ENCODE measurements at regions of chr11 and their contacts with region 1.

Region 1: GRCh38 chr11:11787305-11788062 is 54.3 kb upstream of the USP47 start:
- DNase-seq: peak; percentile 64 to 70
- ATAC-seq: peak; percentile 91 to 98
- H3K4me3 ChIP-seq: no peak overlapping the region
- H3K27ac ChIP-seq: no peak overlapping the region
- H3K4me1 ChIP-seq: no peaks in the 10 kb centered on the region
- CTCF ChIP-seq: peak; percentile 96
- EP300 ChIP-seq: no peak
- POLR2A ChIP-seq: no peak
- RAD21 ChIP-seq: peak; percentile 98

Region 2: GRCh38 chr11:10770626-10771254 is 1016.7 kb before region 1 on chr11:
- CTCF ChIA-PET with region 1: interaction called, 16 read pairs
- POLR2A ChIA-PET with region 1: no interaction called
- DNase-seq: peak; percentile 60 to 72
- ATAC-seq: peak; percentile 73 to 85; a peak in 4 of 6 replicates
- H3K4me3 ChIP-seq: no peak overlapping the region
- H3K27ac ChIP-seq: no peak overlapping the region
- H3K4me1 ChIP-seq: no peaks in the 10 kb centered on the region
- CTCF ChIP-seq: peak; percentile 87
- EP300 ChIP-seq: no peak
- POLR2A ChIP-seq: no peak
- RAD21 ChIP-seq: peak; percentile 63 to 68

Region 3: GRCh38 chr11:10943968-10944367 is 843.5 kb before region 1 on chr11:
- CTCF ChIA-PET with region 1: interaction called, 29 read pairs
- POLR2A ChIA-PET with region 1: no interaction called
- DNase-seq: no peak
- ATAC-seq: peak; percentile 39 to 49; a peak in 2 of 6 replicates
- H3K4me3 ChIP-seq: no peak overlapping the region
- H3K27ac ChIP-seq: peak overlapping the region in 1 of 2 experiments; percentile 13; a peak in 1 of 6 replicates
- H3K4me1 ChIP-seq: peaks cover 9% of the 10 kb centered on the region; the same call in 2 of the 3 replicates
- CTCF ChIP-seq: no peak
- EP300 ChIP-seq: no peak
- POLR2A ChIP-seq: no peak
- RAD21 ChIP-seq: no peak

Region 4: DNA sequence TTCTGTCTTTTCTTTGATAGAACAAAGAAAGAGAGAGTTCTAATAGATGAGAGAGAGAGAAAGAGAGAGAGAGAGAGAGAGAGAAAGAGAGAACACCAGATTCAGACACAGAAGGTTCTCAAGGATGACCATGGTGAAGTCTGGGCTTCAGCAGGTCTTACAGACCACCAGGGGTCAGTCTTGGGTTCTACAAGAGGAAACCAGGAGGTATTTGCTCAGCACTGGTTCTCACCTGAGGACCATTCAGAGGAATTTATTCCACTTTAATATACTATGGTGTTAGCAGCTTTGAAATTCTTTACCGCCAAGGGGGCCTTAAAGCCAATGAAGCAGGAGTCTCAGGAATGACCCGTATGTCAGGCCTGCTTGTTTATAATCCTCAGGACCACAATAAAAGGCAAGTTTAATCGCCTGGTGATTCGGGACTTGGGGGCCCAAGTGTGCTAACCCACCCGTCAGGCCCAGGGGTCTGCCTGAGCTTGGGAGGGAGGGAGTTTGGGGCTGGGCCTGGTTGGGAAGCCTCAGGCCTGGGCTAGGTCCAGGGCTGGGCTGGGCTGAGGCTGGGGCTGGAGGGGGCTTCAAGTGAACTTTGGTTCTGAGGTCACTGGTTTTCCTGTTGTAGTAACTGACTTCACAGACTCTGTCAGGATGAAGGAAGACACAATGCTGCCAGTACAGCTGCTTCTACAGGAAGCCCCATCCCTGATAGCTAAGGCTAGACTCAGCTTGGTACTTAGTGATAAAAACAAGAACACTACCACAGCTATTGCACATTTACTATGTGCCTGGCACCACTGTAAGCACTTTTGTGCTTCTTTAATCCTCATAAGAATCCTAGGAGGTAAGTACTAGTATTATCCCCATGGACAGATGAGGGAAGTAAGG is 750.4 kb before region 1 on chr11:
- CTCF ChIA-PET with region 1: interaction called, 128 read pairs
- POLR2A ChIA-PET with region 1: no interaction called
- DNase-seq: peak; percentile 31 to 80
- ATAC-seq: peak; percentile 83 to 96; a peak in 4 of 6 replicates
- H3K4me3 ChIP-seq: no peak overlapping the region
- H3K27ac ChIP-seq: no peak overlapping the region
- H3K4me1 ChIP-seq: no peaks in the 10 kb centered on the region
- CTCF ChIP-seq: peak; percentile 75
- EP300 ChIP-seq: no peak
- POLR2A ChIP-seq: no peak
- RAD21 ChIP-seq: peak; percentile 76 to 79

Region 5: DNA sequence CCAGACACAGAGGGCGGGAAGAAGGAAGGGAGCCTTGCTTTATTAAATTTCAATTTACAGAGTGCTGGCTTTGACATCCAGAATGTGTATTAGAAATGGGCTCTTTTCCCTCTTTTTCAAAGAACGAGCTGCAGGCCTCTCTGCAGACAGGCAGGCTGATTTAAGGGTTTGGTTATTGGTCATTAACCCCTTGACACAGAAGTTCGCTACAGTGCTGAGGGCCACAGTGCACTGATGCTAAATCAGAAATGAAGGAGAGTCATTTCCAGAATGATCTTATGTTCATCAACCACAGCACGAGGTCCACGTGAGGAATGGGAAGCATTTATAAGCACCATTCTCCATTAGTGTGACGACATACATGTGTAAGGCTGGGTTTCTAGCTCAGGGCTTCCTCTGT is 486.3 kb before region 1 on chr11:
- CTCF ChIA-PET with region 1: interaction called, 10 read pairs
- POLR2A ChIA-PET with region 1: no interaction called
- DNase-seq: no peak
- ATAC-seq: no peak
- H3K4me3 ChIP-seq: no peak overlapping the region
- H3K27ac ChIP-seq: no peak overlapping the region
- H3K4me1 ChIP-seq: no peaks in the 10 kb centered on the region
- CTCF ChIP-seq: no peak
- EP300 ChIP-seq: no peak
- POLR2A ChIP-seq: no peak
- RAD21 ChIP-seq: no peak

Region 6: DNA sequence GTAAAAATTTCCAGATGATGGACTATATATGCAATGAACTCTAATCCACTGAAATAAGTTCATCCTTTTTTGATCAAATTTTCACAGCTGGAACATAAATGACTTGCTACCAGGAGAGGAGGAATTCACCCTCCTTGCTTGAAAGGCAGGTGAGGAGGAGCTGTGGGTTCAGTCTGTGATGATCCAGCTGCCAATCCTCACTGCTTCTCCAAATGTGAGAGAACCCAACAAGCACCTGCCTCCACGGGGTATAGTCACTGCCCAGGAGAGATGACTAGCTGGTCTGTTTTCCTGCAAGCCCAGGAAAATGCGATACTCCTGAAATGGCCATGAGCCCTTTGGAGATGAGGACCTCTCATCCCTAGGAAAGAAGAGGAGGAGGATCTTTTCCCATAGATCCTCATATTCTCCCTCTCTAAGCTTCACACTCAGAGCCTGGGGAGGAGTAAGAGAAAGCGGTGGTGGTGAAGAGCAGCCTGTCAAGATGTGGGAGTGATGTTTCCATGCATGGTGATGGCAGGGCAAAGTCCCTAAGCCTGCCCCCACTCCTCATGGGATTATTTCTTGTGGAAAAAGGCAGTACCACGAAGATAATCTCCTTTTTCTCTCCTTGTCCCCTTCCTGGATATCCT is 23.6 kb before region 1 on chr11:
- CTCF ChIA-PET with region 1: interaction called, 16 read pairs
- POLR2A ChIA-PET with region 1: no interaction called
- DNase-seq: no peak
- ATAC-seq: no peak
- H3K4me3 ChIP-seq: no peak overlapping the region
- H3K27ac ChIP-seq: no peak overlapping the region
- H3K4me1 ChIP-seq: no peaks in the 10 kb centered on the region
- CTCF ChIP-seq: no peak
- EP300 ChIP-seq: no peak
- POLR2A ChIP-seq: no peak
- RAD21 ChIP-seq: no peak

Region 7: GRCh38 chr11:11813288-11813962 is 25.9 kb after region 1 on chr11:
- CTCF ChIA-PET with region 1: interaction called, 11 read pairs
- POLR2A ChIA-PET with region 1: no interaction called
- DNase-seq: peak; percentile 45 to 87
- ATAC-seq: peak; percentile 99
- H3K4me3 ChIP-seq: no peak overlapping the region
- H3K27ac ChIP-seq: peak overlapping the region; percentile 78 to 89
- H3K4me1 ChIP-seq: peaks cover 35% of the 10 kb centered on the region
- CTCF ChIP-seq: no peak
- EP300 ChIP-seq: peak in 1 of 2 experiments; percentile 39; a peak in 1 of 5 replicates
- POLR2A ChIP-seq: no peak
- RAD21 ChIP-seq: no peak